ENCODE measurements at regions of chr1 and their contacts with region 1.

Region 1: DNA sequence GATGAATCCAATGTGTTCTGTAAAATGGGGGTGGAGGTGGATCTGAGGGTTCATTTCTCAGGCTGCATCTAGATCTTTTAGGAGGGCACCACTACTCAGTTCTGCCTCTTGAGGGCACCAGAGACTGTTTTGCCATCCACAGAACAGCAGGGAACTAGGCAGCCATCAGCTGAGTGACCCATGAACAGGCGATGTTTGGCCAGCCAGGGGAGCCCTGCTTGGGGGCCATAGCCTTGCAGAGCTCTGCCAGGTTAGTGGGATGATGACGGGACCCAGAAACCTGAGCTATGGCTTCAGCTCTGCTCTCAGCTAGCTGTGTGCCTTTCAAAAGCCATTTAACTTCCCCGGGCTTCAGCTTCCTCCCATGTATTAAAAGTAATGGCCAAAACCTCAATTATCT is 13.4 kb upstream of the NOS1AP start:
- DNase-seq: peak; percentile 10 to 69 (median 25)
- ATAC-seq: peak; percentile 54
- H3K4me3 ChIP-seq: no peak overlapping the region
- H3K4me3 Mint-ChIP-seq: no peak overlapping the region
- H3K27ac ChIP-seq: no peak overlapping the region
- H3K27ac Mint-ChIP-seq: no peak overlapping the region
- H3K4me1 ChIP-seq: no peaks in the 10 kb centered on the region
- H3K4me1 Mint-ChIP-seq: no peaks in the 10 kb centered on the region
- H3K27me3 ChIP-seq: no peaks in the 10 kb centered on the region
- H3K27me3 Mint-ChIP-seq: peaks cover 20% of the 10 kb centered on the region
- CTCF ChIP-seq: peak; percentile 72

Region 2: GRCh38 chr1:161082991-161083742 is 972.9 kb before region 1 on chr1:
- CTCF ChIA-PET with region 1: no interaction called
- POLR2A ChIA-PET with region 1: no interaction called
- intact Hi-C with region 1: no loop called
- DNase-seq: peak in 2 of 14 experiments; percentile 67 to 77
- ATAC-seq: no peak
- H3K4me3 ChIP-seq: no peak overlapping the region
- H3K4me3 Mint-ChIP-seq: no peak overlapping the region
- H3K27ac ChIP-seq: no peak overlapping the region
- H3K27ac Mint-ChIP-seq: no peak overlapping the region
- H3K4me1 ChIP-seq: no peaks in the 10 kb centered on the region
- H3K4me1 Mint-ChIP-seq: no peaks in the 10 kb centered on the region
- H3K27me3 ChIP-seq: no peaks in the 10 kb centered on the region
- H3K27me3 Mint-ChIP-seq: no peaks in the 10 kb centered on the region
- CTCF ChIP-seq: no peak

Region 3: DNA sequence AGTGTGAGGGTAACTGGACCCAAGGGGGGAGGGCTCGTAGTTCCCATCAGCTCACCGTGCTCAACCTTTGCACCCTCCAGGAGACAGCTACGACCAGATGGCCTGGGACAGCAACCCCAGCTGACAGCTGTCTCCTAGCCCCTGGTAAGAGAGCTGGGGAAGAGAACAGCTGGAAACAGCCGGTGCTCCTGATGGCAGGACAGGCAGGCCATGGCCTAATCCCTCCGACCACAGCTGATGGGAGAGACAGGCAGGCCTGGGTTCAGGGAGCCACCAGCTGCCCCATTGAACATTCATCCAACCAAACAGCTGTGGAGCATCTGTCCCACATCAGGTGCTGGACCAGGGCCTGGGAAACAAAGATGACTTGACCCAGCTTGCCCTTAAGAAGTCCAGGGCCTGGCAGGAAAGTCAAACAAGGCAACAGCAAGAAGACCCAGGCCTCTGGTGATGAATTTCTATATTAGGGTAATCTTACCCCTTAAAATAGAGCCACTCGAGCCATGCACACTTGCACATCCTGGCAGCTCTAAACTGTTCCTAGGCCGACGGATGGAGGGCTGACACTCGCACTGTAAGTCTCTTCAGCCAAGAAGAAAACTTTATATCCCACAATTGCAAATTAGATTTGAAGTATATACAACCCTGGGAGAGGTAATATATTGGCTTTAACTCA is 44.6 kb before region 1 on chr1:
- CTCF ChIA-PET with region 1: no interaction called
- POLR2A ChIA-PET with region 1: no interaction called
- intact Hi-C with region 1: no loop called
- DNase-seq: no peak
- ATAC-seq: no peak
- H3K4me3 ChIP-seq: no peak overlapping the region
- H3K4me3 Mint-ChIP-seq: no peak overlapping the region
- H3K27ac ChIP-seq: no peak overlapping the region
- H3K27ac Mint-ChIP-seq: no peak overlapping the region
- H3K4me1 ChIP-seq: no peaks in the 10 kb centered on the region
- H3K4me1 Mint-ChIP-seq: no peaks in the 10 kb centered on the region
- H3K27me3 ChIP-seq: no peaks in the 10 kb centered on the region
- H3K27me3 Mint-ChIP-seq: peaks cover 3% of the 10 kb centered on the region
- CTCF ChIP-seq: no peak

Region 4: GRCh38 chr1:162276493-162276892 is 220.4 kb after region 1 on chr1:
- CTCF ChIA-PET with region 1: no interaction called
- POLR2A ChIA-PET with region 1: no interaction called
- intact Hi-C with region 1: loop called in 1 of 2 experiments (anchors 5 kb)
- DNase-seq: peak in 1 of 14 experiments; percentile 5
- ATAC-seq: no peak
- H3K4me3 ChIP-seq: no peak overlapping the region
- H3K4me3 Mint-ChIP-seq: no peak overlapping the region
- H3K27ac ChIP-seq: no peak overlapping the region
- H3K27ac Mint-ChIP-seq: no peak overlapping the region
- H3K4me1 ChIP-seq: no peaks in the 10 kb centered on the region
- H3K4me1 Mint-ChIP-seq: no peaks in the 10 kb centered on the region
- H3K27me3 ChIP-seq: peaks cover 3 to 12% of the 10 kb centered on the region in 2 experiments
- H3K27me3 Mint-ChIP-seq: peaks cover 47% of the 10 kb centered on the region
- CTCF ChIP-seq: no peak

Region 5: DNA sequence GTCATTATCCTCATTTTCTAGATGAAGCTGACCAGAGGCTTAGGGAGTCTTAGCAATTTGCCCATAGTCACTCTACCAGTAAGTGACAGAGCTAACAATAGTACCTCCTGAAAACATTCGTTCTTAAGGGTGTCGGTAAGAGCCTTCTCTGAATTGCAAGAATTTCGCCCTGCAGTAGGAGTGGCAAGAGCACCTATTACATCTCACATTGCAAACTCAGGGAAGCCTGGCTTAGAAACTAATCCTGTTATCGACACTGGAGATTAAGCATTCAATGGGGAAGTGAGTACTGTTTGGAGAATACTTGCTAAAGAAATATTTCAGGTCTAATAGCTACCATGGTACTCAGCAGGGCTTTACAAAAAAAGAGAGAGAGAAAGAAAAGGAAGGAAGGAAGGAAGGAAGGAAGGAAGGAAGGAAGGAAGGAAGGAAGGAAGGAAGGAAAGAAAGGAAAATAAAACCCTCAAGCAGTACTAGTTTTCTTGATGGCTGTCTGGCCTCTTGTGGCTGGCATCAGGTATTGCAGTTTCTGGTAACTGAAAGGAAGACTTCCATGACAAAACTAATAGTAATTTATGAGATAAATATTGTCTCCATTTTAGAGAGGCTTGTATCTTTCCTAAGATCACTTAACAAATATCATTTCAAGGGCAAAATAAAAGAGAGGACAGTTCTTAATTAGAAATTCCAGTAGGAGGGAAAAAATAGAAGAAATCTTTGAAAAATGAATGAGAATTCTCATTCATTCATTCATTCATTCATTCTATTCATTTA is 335.9 kb after region 1 on chr1:
- CTCF ChIA-PET with region 1: no interaction called
- POLR2A ChIA-PET with region 1: no interaction called
- intact Hi-C with region 1: loop called (anchors 1 kb)
- DNase-seq: peak in 4 of 14 experiments; percentile 15 to 38 (median 26)
- ATAC-seq: no peak
- H3K4me3 ChIP-seq: no peak overlapping the region
- H3K4me3 Mint-ChIP-seq: no peak overlapping the region
- H3K27ac ChIP-seq: no peak overlapping the region
- H3K27ac Mint-ChIP-seq: no peak overlapping the region
- H3K4me1 ChIP-seq: no peaks in the 10 kb centered on the region
- H3K4me1 Mint-ChIP-seq: no peaks in the 10 kb centered on the region
- H3K27me3 ChIP-seq: peaks cover 4 to 13% of the 10 kb centered on the region in 2 experiments
- H3K27me3 Mint-ChIP-seq: peaks cover 37% of the 10 kb centered on the region
- CTCF ChIP-seq: peak; percentile 68

Region 6: GRCh38 chr1:162627662-162628296 is 571.7 kb after region 1 on chr1:
- CTCF ChIA-PET with region 1: no interaction called
- POLR2A ChIA-PET with region 1: no interaction called
- intact Hi-C with region 1: loop called (anchors 2 to 5 kb)
- DNase-seq: peak in 4 of 14 experiments; percentile 3 to 31 (median 22)
- ATAC-seq: no peak
- H3K4me3 ChIP-seq: no peak overlapping the region
- H3K4me3 Mint-ChIP-seq: no peak overlapping the region
- H3K27ac ChIP-seq: no peak overlapping the region
- H3K27ac Mint-ChIP-seq: no peak overlapping the region
- H3K4me1 ChIP-seq: no peaks in the 10 kb centered on the region
- H3K4me1 Mint-ChIP-seq: no peaks in the 10 kb centered on the region
- H3K27me3 ChIP-seq: peaks cover 0 to 3% of the 10 kb centered on the region in 2 experiments
- H3K27me3 Mint-ChIP-seq: peaks cover 21% of the 10 kb centered on the region
- CTCF ChIP-seq: peak; percentile 66

Region 7: DNA sequence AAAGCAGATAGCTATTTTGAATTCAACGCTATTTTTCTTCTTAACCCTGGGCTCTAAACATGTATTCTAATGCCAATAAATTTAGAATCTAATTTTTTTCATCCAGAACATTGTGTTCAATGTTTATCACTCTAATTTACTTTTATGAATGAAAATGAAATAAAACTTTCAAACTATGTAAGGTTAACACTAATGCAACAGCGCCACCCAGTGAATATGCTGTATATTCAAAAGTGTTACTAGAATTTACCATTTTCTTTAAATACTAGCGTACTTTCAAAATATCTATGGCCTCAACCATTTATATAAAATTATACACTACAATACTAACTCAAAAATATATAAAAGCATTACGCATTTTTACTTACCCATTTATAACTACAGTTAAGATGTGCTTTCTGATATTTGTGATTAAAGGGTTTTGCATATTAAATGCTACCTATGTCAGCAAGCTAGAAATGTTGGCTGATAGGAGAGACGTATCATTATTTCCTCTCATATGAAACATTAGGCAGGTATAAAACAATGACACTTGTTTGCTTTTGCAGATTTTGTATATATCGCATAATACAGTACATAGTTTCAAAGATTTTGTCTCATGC is 1259.8 kb after region 1 on chr1:
- CTCF ChIA-PET with region 1: no interaction called
- POLR2A ChIA-PET with region 1: no interaction called
- intact Hi-C with region 1: loop called (anchors 2 to 10 kb)
- DNase-seq: peak in 12 of 14 experiments; percentile 6 to 71 (median 26)
- ATAC-seq: no peak
- H3K4me3 ChIP-seq: no peak overlapping the region
- H3K4me3 Mint-ChIP-seq: no peak overlapping the region
- H3K27ac ChIP-seq: no peak overlapping the region
- H3K27ac Mint-ChIP-seq: no peak overlapping the region
- H3K4me1 ChIP-seq: peaks cover 2% of the 10 kb centered on the region
- H3K4me1 Mint-ChIP-seq: peaks cover 4% of the 10 kb centered on the region
- H3K27me3 ChIP-seq: no peaks in the 10 kb centered on the region
- H3K27me3 Mint-ChIP-seq: no peaks in the 10 kb centered on the region
- CTCF ChIP-seq: peak; percentile 68

Measured in CD4-positive, alpha-beta T cell (primary cell).